ENCODE measurements at regions of chr10 and their contacts with region 1.

Region 1: DNA sequence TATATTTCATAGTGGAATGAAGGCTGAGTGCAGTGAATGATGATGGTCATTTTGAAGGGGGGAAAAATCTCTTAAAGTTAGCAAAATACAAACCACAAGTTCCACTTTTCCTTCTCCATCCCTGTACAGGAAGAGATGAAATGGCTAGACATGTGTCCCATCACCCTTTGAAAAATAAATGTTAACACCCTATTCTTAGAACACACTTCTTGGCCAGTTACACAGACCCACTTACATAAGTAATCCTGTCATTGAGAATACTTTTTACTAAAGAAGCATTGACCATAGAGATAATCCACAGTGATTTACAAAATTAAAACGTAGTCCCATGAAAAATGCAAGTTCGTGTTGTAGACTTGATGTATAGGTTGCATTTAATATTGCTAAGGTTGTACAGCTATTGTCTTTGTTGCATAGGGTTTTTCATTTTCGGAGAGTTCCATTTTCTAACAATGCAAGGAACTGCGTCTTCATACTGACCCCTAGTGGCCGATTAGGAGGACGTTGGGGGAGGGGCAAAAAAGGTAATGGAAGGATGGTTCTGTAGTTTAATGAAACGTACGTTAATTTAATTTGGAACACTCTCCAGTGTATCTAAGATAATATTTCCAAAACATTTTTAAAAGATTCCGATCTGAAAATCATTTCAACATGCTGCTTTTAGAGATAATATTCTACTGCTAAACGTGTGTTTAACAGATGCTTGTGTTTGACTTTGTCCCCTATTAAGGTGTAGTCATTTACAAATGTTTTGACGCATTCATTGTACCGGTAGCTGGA is 60.9 kb downstream of the ARMC3 start:
- DNase-seq: peak in 1 of 2 donors; percentile 16
- ATAC-seq: peak; percentile 61 to 89 (median 68)
- H3K4me3 ChIP-seq: no peak overlapping the region
- H3K27ac ChIP-seq: no peak overlapping the region
- H3K4me1 ChIP-seq: no peaks in the 10 kb centered on the region
- H3K27me3 ChIP-seq: no peaks in the 10 kb centered on the region
- CTCF ChIP-seq: peak; percentile 97

Region 2: GRCh38 chr10:21989453-21990154 is 999.2 kb before region 1 on chr10:
- intact Hi-C with region 1: loop called in 1 of 2 experiments (anchors 5 kb)
- DNase-seq: peak; percentile 39 to 52
- ATAC-seq: peak; percentile 49 to 82 (median 69)
- H3K4me3 ChIP-seq: no peak overlapping the region
- H3K27ac ChIP-seq: no peak overlapping the region
- H3K4me1 ChIP-seq: peaks cover 4% of the 10 kb centered on the region
- H3K27me3 ChIP-seq: no peaks in the 10 kb centered on the region
- CTCF ChIP-seq: peak; percentile 50

Region 3: GRCh38 chr10:22003079-22003913 is 985.5 kb before region 1 on chr10 and contains the start of gene DNAJC1:
- intact Hi-C with region 1: loop called in 1 of 2 experiments (anchors 5 kb)
- DNase-seq: peak; percentile 99
- ATAC-seq: peak; percentile 97 to 99 (median 98)
- H3K4me3 ChIP-seq: peak within 1 kb of the TSS; percentile 78
- H3K27ac ChIP-seq: peak within 1 kb of the TSS; percentile 94
- H3K4me1 ChIP-seq: peaks cover 12% of the 10 kb centered on the region
- H3K27me3 ChIP-seq: no peaks in the 10 kb centered on the region
- CTCF ChIP-seq: no peak
- total RNA-seq, gene DNAJC1: 6.7 to 18.8 (median 11.3) TPM

Region 4: GRCh38 chr10:22010973-22011408 is 977.8 kb before region 1 on chr10:
- intact Hi-C with region 1: loop called in 1 of 2 experiments (anchors 5 kb)
- DNase-seq: no peak
- ATAC-seq: no peak
- H3K4me3 ChIP-seq: no peak overlapping the region
- H3K27ac ChIP-seq: no peak overlapping the region
- H3K4me1 ChIP-seq: no peaks in the 10 kb centered on the region
- H3K27me3 ChIP-seq: no peaks in the 10 kb centered on the region
- CTCF ChIP-seq: peak; percentile 53

Region 5: GRCh38 chr10:22580711-22581110 is 408.1 kb before region 1 on chr10:
- intact Hi-C with region 1: loop called in 1 of 2 experiments (anchors 10 kb)
- DNase-seq: no peak
- ATAC-seq: peak in 2 of 4 donors; percentile 35 to 77
- H3K4me3 ChIP-seq: no peak overlapping the region
- H3K27ac ChIP-seq: no peak overlapping the region
- H3K4me1 ChIP-seq: peaks cover 3% of the 10 kb centered on the region
- H3K27me3 ChIP-seq: no peaks in the 10 kb centered on the region
- CTCF ChIP-seq: no peak

Region 6: DNA sequence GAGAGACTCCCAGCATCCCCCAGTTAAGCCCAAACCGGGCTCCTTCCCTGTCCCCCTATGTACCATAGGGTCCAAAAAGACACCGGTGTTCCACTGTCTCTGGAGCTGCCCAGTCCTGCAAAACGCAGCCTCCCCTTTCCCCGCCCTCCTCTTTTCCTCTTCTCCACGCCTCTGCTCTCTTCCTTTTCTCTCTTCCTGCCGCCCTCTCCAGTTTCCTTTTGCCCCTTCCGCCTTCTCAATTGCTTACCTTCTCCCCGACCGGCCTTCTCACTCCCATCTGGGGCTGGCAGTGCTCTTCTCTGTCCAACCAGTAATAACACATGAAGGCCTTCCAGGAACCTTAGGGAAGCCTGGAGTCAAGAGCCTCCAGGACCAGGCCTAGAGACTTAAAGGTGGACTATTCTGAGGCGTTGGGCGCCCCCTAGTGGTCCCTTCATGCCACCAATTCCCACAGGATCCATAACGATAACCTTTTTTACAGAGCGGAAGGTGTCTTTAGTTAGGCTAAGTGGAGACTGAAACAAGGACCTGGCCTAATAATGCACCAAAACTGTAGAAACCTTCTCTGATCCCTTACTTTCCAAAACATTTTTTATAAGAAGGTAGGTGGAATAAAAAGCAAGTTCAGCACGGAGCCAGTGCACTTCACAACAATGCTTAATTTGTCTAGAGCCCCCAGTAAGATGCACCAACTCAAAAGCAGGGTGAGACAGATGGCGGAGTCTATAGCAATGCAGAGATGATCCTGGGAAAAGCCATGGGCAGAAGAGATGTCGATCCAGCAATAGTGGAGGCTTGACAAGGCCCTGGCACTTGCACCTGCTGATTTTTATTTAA is 79.4 kb after region 1 on chr10:
- intact Hi-C with region 1: loop called in 1 of 2 experiments (anchors 5 kb)
- DNase-seq: peak; percentile 72 to 79
- ATAC-seq: peak; percentile 67 to 77 (median 72)
- H3K4me3 ChIP-seq: no peak overlapping the region
- H3K27ac ChIP-seq: no peak overlapping the region
- H3K4me1 ChIP-seq: peaks cover 35% of the 10 kb centered on the region
- H3K27me3 ChIP-seq: no peaks in the 10 kb centered on the region
- CTCF ChIP-seq: peak; percentile 89

Measured in psoas muscle (tissue), 8 donors.